CD8-positive, alpha-beta T cell (primary cell): ENCODE measurements at regions of chr17 and their contacts with region 1.

Region 1: DNA sequence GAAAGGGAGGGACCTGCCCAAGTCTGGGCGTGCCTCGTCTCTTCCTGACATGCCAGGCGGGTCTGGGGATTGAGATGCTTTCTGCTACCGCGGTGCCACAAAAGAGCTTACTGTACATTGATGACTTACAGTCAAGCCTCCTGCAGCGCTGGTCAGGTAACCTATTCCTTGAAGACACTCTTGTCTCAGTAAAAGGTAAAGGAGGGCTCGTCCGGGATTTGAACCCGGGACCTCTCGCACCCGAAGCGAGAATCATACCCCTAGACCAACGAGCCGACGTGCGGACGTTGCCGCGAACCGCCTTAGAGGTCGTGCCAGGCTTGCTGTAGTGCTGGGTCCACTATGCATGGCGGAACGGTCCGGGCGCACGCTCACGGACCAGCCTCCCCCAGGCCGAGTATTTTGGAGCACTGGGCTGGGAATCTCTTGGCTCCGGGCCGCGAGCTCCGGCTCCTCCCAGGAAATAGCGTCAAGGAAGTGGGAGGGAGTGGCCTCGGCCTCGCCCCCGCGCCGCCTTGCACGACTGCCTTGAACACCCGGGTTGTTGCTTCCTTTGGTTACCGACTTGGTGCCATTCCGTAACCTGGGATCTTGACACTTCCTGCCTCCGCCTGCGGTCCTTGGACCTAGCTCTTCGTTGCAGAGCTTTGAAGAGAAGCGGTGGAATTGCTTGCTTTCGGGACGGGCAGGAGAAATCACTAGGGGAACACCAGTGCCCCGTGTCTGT is 12.4 kb upstream of the AURKB start:
- DNase-seq: peak; percentile 82 to 93 (median 90)
- ATAC-seq: peak; percentile 47
- H3K4me3 ChIP-seq: peak overlapping the region; percentile 80 to 93
- H3K4me3 Mint-ChIP-seq: peak overlapping the region; percentile 92
- H3K27ac ChIP-seq: peak overlapping the region; percentile 90 to 98
- H3K27ac Mint-ChIP-seq: peak overlapping the region; percentile 97
- H3K4me1 ChIP-seq: peaks cover 43% of the 10 kb centered on the region
- H3K4me1 Mint-ChIP-seq: peaks cover 61% of the 10 kb centered on the region
- H3K27me3 ChIP-seq: no peaks in the 10 kb centered on the region
- H3K27me3 Mint-ChIP-seq: no peaks in the 10 kb centered on the region
- CTCF ChIP-seq: no peak

Region 2: DNA sequence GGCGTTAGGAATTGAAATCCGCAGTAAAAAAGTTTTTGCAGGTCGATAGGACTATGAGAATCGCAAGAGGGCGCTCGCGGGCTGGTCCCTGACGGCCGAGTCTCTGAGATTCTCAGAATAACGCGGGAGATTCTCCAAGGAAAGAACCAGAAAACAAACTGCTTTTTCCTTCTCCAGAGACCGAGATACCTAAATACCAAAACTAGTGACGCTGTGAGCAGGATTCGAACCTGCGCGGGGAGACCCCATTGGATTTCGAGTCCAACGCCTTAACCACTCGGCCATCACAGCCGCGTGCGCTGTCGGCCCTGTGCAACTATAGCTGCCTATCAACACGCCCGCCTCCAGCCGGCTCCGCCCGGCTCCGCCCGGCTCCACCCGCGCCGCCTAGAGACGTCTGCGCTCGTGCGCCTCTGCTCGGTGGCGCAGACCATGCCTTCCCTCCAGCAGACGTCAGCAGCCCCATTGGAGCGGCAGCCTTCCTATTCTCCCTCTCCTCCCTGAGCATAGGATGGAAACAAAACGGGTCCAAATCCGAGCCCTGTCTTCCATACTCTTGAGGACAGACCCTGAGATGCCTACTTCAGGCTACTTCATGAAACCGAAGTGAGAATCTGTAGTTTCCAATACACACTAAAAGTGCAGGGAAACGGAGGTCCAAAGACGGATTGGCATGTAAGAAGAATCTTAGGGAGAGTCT is 84.0 kb before region 1 on chr17:
- CTCF ChIA-PET with region 1: interaction called, 18 read pairs
- POLR2A ChIA-PET with region 1: interaction called, 28 read pairs
- intact Hi-C with region 1: loop called (anchors 1 kb)
- DNase-seq: peak; percentile 92 to 98 (median 95)
- ATAC-seq: peak; percentile 84
- H3K4me3 ChIP-seq: peak overlapping the region; percentile 70 to 75
- H3K4me3 Mint-ChIP-seq: no peak overlapping the region
- H3K27ac ChIP-seq: peak overlapping the region; percentile 89 to 97
- H3K27ac Mint-ChIP-seq: no peak overlapping the region
- H3K4me1 ChIP-seq: peaks cover 18% of the 10 kb centered on the region
- H3K4me1 Mint-ChIP-seq: no peaks in the 10 kb centered on the region
- H3K27me3 ChIP-seq: no peaks in the 10 kb centered on the region
- H3K27me3 Mint-ChIP-seq: no peaks in the 10 kb centered on the region
- CTCF ChIP-seq: peak; percentile 87

Region 3: DNA sequence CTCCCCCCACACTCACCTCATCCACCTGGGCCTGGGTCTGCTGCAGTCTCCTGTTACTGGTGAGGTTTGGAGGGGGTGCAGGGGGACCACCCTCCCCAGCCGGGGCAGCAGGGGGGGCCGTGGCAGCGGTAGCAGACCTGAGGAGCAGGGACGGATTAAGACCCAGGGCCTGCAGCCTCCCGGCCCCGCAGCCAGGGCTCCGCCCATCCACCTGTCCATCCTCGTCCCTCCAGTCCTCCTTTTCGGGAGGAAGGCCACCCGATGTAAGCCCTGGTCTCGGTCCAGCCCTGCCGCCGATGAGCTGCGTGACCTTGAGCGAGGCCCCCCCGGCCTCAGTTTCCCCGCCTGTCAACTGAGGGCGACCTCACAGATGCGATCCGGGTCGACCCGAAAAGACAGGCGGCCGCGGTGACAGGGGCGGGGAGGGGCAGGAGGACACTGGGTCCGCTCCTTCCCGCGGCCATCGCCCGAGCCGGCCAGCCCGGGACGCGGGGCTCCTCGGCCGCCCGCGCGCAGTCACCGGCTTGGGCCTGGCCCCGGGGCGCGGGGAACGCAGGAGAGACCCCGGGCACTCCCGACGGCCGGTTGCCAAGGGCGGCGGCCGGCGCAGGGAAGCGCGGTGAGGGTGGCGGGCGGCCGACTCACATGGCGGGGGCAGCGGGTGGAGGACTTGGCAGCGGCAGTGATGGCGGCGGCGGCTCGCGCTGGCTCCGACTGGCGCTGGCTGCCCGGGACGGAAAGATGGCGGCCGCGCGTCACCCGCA is 60.4 kb before region 1 on chr17 and contains the start of gene VAMP2:
- CTCF ChIA-PET with region 1: interaction called, 13 read pairs
- POLR2A ChIA-PET with region 1: interaction called, 48 read pairs
- intact Hi-C with region 1: loop called in 1 of 2 experiments (anchors 2 kb)
- DNase-seq: peak; percentile 72 to 92 (median 83)
- ATAC-seq: peak; percentile 47
- H3K4me3 ChIP-seq: peak within 1 kb of the TSS; percentile 96 to 99
- H3K4me3 Mint-ChIP-seq: peak within 1 kb of the TSS; percentile 92
- H3K27ac ChIP-seq: peak within 1 kb of the TSS; percentile 99 to 100
- H3K27ac Mint-ChIP-seq: peak within 1 kb of the TSS; percentile 98
- H3K4me1 ChIP-seq: peaks cover 62% of the 10 kb centered on the region
- H3K4me1 Mint-ChIP-seq: peaks cover 64% of the 10 kb centered on the region
- H3K27me3 ChIP-seq: no peaks in the 10 kb centered on the region
- H3K27me3 Mint-ChIP-seq: no peaks in the 10 kb centered on the region
- CTCF ChIP-seq: no peak
- total RNA-seq, gene VAMP2: 302 to 303 TPM

Region 4: DNA sequence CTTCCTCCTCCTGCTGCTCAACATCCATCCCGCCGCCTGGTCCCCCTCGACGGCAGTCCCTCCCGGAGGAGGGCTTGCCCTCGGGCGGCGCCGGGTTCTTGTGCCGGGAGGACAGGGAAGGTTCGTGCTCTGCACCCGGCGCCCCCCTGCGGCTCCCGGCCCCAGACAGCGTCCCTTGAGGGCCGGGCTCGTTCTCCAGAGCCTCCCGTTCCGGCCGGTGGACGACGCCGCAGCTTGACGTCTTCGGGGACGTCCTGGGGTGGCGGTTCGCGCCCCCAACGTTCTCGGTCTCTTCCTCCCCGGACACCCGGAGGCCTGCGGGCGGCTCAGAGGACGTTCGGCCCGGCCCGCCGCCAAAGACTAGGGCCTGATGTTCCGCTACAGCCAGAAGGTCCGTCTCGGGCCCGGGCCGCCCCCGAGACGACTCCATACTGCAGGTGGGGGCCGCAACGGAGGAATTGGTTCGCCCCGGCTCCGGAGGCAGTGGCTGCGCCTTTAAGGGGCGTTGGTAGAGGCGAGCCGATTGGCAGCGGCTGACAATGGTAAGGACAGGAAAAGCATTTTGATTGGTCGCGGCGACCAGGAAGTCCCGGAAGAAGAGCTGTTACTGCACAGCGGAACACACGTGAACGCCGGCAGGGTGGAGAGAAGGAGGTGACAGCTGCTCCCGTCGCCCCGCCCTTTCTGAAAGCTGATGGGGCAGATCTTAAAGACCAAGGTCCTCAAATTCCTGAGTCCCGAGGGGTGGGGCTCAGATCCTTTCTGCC is 32.9 kb before region 1 on chr17 and contains the start of gene BORCS6:
- CTCF ChIA-PET with region 1: interaction called, 69 read pairs
- POLR2A ChIA-PET with region 1: interaction called, 213 read pairs
- intact Hi-C with region 1: loop called (anchors 1 kb)
- DNase-seq: peak; percentile 87 to 99 (median 93)
- ATAC-seq: peak; percentile 69
- H3K4me3 ChIP-seq: peak within 1 kb of the TSS; percentile 95 to 98
- H3K4me3 Mint-ChIP-seq: peak within 1 kb of the TSS; percentile 1
- H3K27ac ChIP-seq: peak within 1 kb of the TSS; percentile 63 to 93
- H3K27ac Mint-ChIP-seq: peak within 1 kb of the TSS; percentile 94
- H3K4me1 ChIP-seq: peaks cover 38% of the 10 kb centered on the region
- H3K4me1 Mint-ChIP-seq: peaks cover 13% of the 10 kb centered on the region
- H3K27me3 ChIP-seq: no peaks in the 10 kb centered on the region
- H3K27me3 Mint-ChIP-seq: no peaks in the 10 kb centered on the region
- CTCF ChIP-seq: no peak
- total RNA-seq, gene BORCS6: 6.1 to 6.7 TPM

Region 5: GRCh38 chr17:8209909-8210760 is 12.7 kb before region 1 on chr17 and contains the start of gene AURKB:
- CTCF ChIA-PET with region 1: interaction called, 5 read pairs
- POLR2A ChIA-PET with region 1: interaction called, 36 read pairs
- intact Hi-C with region 1: loop called in 1 of 2 experiments (anchors 1 kb)
- DNase-seq: peak; percentile 81 to 98 (median 92)
- ATAC-seq: peak; percentile 100
- H3K4me3 ChIP-seq: peak within 1 kb of the TSS; percentile 64 to 71
- H3K4me3 Mint-ChIP-seq: peak within 1 kb of the TSS; percentile 93
- H3K27ac ChIP-seq: peak within 1 kb of the TSS; percentile 26 to 67
- H3K27ac Mint-ChIP-seq: peak within 1 kb of the TSS; percentile 87
- H3K4me1 ChIP-seq: peaks cover 10% of the 10 kb centered on the region
- H3K4me1 Mint-ChIP-seq: peaks cover 17% of the 10 kb centered on the region
- H3K27me3 ChIP-seq: no peaks in the 10 kb centered on the region
- H3K27me3 Mint-ChIP-seq: no peaks in the 10 kb centered on the region
- CTCF ChIP-seq: no peak
- total RNA-seq, gene AURKB: 0.62 to 1.1 TPM

Region 6: DNA sequence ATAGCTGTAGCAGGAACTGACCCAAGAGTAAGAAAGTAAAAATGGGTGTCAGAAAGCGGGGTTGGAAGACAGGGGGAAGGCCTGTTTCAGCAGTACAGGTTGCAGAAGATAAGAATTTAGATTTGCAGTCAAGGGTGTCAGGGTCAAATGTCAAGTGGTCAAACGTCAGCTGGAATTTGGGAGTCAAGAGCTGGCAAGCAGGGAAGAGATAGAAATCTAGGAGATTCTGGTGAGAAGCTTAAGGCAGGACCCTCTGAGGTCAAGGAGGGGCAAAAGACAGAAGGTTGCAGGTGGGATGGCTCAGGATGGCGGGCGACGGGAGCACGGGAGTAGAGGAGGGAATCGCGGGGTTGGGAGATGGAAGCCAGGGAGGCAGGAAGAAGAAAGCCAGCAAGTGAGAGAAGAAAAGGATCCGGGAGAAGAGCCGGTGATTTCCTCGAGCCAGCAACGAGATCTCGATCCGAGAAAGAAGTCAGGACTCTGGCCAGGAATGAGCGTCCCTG is 72.1 kb after region 1 on chr17:
- CTCF ChIA-PET with region 1: interaction called, 28 read pairs
- POLR2A ChIA-PET with region 1: interaction called, 39 read pairs
- intact Hi-C with region 1: loop called (anchors 1 kb)
- DNase-seq: no peak
- ATAC-seq: no peak
- H3K4me3 ChIP-seq: peak overlapping the region; percentile 80 to 98
- H3K4me3 Mint-ChIP-seq: peak overlapping the region; percentile 86
- H3K27ac ChIP-seq: peak overlapping the region; percentile 80 to 87
- H3K27ac Mint-ChIP-seq: peak overlapping the region; percentile 90
- H3K4me1 ChIP-seq: peaks cover 12% of the 10 kb centered on the region
- H3K4me1 Mint-ChIP-seq: peaks cover 30% of the 10 kb centered on the region
- H3K27me3 ChIP-seq: no peaks in the 10 kb centered on the region
- H3K27me3 Mint-ChIP-seq: no peaks in the 10 kb centered on the region
- CTCF ChIP-seq: no peak

Region 7: GRCh38 chr17:8376271-8377067 is 153.7 kb after region 1 on chr17 and contains the start of gene KRABD2:
- CTCF ChIA-PET with region 1: no interaction called
- POLR2A ChIA-PET with region 1: interaction called, 4 read pairs
- intact Hi-C with region 1: loop called in 1 of 2 experiments (anchors 1 kb)
- DNase-seq: peak; percentile 81 to 93 (median 92)
- ATAC-seq: peak; percentile 100
- H3K4me3 ChIP-seq: peak within 1 kb of the TSS; percentile 71 to 91
- H3K4me3 Mint-ChIP-seq: peak within 1 kb of the TSS; percentile 90
- H3K27ac ChIP-seq: peak within 1 kb of the TSS; percentile 63 to 64
- H3K27ac Mint-ChIP-seq: peak within 1 kb of the TSS; percentile 88
- H3K4me1 ChIP-seq: peaks cover 35% of the 10 kb centered on the region
- H3K4me1 Mint-ChIP-seq: peaks cover 49% of the 10 kb centered on the region
- H3K27me3 ChIP-seq: no peaks in the 10 kb centered on the region
- H3K27me3 Mint-ChIP-seq: no peaks in the 10 kb centered on the region
- CTCF ChIP-seq: peak; percentile 47